Calu3 (cell line): ENCODE measurements at regions of chr6 and their contacts with region 1.

Region 1: DNA sequence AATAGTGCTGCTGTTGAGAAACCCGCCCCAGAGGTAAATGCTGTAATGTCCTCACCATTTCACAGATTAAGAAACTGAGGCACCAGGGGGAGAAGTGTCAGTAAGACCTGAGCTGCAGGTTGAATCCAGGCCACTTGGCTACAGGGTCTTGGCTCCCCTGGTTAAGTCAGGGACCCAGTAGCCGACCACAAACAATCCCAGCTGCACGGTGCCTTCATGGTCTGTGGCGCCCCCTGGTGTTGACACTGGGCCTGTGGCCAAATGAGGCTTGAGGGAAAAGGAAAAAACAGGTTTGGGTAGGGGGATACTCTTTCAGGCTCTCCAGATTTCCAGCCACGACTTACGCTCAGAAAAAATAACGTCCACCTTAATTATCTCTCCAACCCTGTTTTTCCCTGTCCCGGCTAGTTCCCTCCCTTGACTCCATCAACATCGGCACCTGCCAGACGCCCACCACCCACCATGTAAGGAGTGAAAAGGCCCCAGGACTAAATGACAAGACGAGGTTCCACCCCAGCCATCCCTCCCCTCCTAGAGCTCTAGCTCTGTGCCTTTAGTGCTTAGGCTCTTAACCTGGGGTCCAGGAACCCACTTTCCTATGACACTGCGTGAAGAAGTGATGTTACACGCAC is 47.7 kb upstream of the POLR1H start:
- DNase-seq: no peak
- H3K4me3 Mint-ChIP-seq: no peak overlapping the region
- H3K27ac Mint-ChIP-seq: no peak overlapping the region
- H3K4me1 Mint-ChIP-seq: no peaks in the 10 kb centered on the region
- H3K27me3 Mint-ChIP-seq: no peaks in the 10 kb centered on the region
- CTCF ChIP-seq: peak; percentile 97

Region 2: DNA sequence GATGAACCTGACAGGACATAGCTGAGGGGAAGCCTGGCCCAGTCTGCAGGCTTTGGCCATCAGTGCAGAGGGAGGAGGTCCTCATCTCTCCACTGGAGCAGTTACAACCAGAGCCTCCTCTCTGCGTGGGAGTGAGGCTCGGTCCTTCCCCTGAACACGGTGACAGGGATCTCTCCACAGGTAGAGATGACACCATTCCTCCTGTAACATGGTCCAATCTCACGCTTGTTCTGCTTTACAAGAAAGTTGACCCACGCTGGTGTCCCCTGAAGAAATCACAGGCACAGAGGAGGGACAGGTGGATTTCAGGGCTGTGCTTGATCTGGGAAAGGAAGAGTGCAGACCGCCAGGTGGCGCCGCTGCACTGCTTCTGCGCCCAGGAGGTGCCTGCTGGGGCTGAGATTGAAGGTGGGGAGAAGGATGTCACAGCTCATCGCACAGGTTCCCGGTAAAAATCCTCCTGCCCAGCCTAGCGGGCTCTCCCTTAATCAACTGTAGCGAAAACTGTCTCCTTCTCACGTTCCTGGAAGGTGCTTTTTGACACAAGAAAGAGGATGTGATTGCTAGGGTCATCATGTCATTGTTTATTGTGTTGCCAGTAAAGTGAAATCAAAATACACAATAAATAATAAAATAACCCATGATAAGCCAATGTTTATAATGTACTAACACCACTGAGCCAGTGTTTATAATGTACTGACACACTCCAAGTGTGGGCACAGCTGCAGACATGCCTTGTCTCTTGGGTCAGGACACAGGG is 165.4 kb before region 1 on chr6:
- CTCF ChIA-PET with region 1: interaction called, 7 read pairs
- intact Hi-C with region 1: loop called (anchors 1 kb)
- DNase-seq: peak; percentile 91
- H3K4me3 Mint-ChIP-seq: no peak overlapping the region
- H3K27ac Mint-ChIP-seq: no peak overlapping the region
- H3K4me1 Mint-ChIP-seq: peaks cover 30% of the 10 kb centered on the region
- H3K27me3 Mint-ChIP-seq: peaks cover 55% of the 10 kb centered on the region
- CTCF ChIP-seq: peak; percentile 97

Region 3: GRCh38 chr6:30295837-30296236 is 282.4 kb after region 1 on chr6:
- CTCF ChIA-PET with region 1: no interaction called
- intact Hi-C with region 1: no loop called
- DNase-seq: no peak
- H3K4me3 Mint-ChIP-seq: no peak overlapping the region
- H3K27ac Mint-ChIP-seq: no peak overlapping the region
- H3K4me1 Mint-ChIP-seq: no peaks in the 10 kb centered on the region
- H3K27me3 Mint-ChIP-seq: no peaks in the 10 kb centered on the region
- CTCF ChIP-seq: no peak